ENCODE measurements at regions of chr2 and their contacts with region 1.

Region 1: DNA sequence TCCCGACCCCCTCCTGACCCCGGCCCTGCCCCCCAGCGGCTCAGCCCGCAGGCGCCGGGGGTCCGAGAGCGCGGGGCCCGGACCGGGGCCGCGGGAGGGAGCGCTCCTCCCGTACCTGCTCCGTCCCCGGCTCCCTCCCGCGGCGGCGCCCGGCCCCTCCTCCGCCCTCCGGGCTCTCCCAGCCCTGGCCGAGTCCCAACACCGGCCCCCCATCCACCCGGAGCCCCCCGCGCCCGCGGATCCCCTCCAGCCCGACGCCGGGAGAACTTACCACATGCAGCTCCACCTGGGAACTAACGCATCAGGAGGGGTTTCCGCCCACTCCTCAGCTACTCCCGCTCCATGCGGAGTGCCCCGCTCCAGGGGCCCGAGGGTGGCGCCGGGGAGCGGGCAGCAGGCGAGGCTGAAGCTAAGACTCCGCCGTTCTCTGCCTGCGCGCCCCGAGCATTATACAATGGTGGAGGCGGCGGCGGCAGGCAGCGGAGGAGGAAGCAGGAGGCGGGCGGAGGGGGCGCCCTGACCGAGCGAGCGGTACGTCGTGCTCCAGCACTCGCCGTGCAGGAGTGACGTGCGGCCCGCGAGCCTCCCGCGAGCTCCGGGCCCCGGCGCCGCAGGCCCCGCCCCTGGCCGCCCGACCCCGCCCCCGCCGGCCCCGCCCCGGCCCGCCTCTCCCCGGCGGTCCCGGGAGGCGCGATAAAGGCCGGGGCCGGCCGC is at the start of gene SERTAD2:
- DNase-seq: peak; percentile 97
- total RNA-seq, gene SERTAD2: 17.3 to 21.8 TPM

Region 2: GRCh38 chr2:64586883-64587481 is 66.5 kb before region 1 on chr2:
- intact Hi-C with region 1: loop called (anchors 5 to 10 kb)
- DNase-seq: no peak

Region 3: DNA sequence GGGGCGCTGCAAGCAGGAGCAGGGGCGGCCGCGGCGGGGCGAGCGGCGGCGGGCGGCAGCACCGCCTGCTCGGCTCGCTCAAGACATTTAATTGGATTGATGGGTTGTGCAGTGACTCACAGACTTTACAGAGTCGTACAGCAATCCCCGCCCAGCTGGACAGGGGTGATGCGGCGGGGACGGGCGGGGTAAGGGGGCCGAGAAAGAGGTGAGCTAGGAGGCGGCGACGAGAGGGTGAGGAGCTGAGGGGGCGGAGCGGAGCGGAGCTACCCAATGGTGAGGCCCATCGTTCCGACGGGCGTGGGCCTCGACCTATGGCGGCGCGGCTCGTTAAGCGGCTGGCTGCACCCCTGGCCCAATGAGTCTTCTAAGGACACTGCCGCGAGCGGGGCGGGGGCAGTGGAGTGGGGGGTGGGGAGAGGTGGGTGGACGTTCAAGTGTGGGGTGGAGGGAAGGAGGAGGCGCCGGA is 97.3 kb after region 1 on chr2:
- intact Hi-C with region 1: loop called (anchors 2 to 5 kb)
- DNase-seq: peak; percentile 100

Measured in posterior vena cava (tissue), 2 donors.